ENCODE measurements at regions of chr10 and their contacts with region 1.

Region 1: GRCh38 chr10:123132576-123133477 is 2.9 kb upstream of the HMX3 start:
- DNase-seq: peak; percentile 79
- H3K4me3 ChIP-seq: peak overlapping the region in 2 of 3 experiments; percentile 5 to 12
- H3K27ac ChIP-seq: no peak overlapping the region
- H3K4me1 ChIP-seq: peaks cover 10% of the 10 kb centered on the region
- H3K27me3 ChIP-seq: peaks cover 74 to 77% of the 10 kb centered on the region in 2 experiments
- CTCF ChIP-seq: peak; percentile 90 to 92
- POLR2A ChIP-seq: no peak

Region 2: DNA sequence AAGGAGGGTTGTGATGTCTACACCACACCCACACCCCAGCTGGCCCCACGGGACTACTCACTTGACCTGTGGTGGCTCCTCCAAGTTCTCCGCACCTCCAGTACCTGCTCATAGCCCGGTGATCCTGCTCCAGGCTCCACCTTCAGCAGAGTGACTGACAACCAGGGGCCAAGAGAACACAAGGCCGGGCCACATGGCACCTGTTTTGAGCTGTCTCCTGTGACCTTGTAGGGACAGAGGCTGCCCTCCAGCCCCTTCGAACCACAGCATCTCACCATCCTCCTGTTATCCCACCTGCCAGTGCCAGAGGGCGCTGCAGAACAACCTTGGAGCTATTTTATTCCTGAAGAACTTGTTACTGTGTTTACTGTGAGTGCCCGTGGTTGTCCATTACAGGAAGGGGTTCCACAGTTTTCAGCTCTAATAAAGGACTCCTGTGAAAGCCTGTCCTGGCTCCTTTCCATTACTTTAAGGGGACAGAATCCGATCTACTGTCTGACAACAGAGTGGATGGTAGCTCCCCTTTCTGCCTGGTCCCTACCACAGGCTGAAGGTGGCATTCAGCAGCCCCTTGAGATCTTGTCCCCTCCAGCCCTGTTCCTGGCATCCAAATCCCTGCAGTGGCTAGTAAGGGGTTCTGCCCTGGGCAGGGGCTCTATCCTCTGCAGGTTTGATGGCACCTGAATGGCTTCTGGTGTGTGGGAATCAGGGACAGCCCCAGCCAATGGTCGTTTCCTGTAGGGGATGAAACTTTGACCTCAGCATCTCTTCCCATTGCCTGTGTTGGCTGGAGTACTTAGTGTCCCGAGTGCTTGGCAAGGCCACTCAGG is 484.0 kb before region 1 on chr10:
- CTCF ChIA-PET with region 1: interaction called, 3 read pairs
- POLR2A ChIA-PET with region 1: no interaction called
- dilution Hi-C with region 1: no loop called
- intact Hi-C with region 1: loop called (anchors 5 kb)
- DNase-seq: peak; percentile 50
- H3K4me3 ChIP-seq: no peak overlapping the region
- H3K27ac ChIP-seq: no peak overlapping the region
- H3K4me1 ChIP-seq: no peaks in the 10 kb centered on the region
- H3K27me3 ChIP-seq: peaks cover 3 to 9% of the 10 kb centered on the region in 2 experiments
- CTCF ChIP-seq: peak; percentile 72 to 75
- POLR2A ChIP-seq: no peak

Region 3: GRCh38 chr10:123147635-123148413 is 15.0 kb after region 1 on chr10 and contains the start of gene HMX2:
- CTCF ChIA-PET with region 1: interaction called, 20 read pairs
- POLR2A ChIA-PET with region 1: no interaction called
- dilution Hi-C with region 1: no loop called
- intact Hi-C with region 1: no loop called
- DNase-seq: no peak
- H3K4me3 ChIP-seq: no peak within 1 kb of the TSS
- H3K27ac ChIP-seq: no peak within 1 kb of the TSS
- H3K4me1 ChIP-seq: peaks cover 8% of the 10 kb centered on the region
- H3K27me3 ChIP-seq: peaks cover 90 to 99% of the 10 kb centered on the region in 2 experiments
- CTCF ChIP-seq: no peak
- POLR2A ChIP-seq: no peak
- total RNA-seq, gene HMX2: not detected in 2 replicates

Region 4: GRCh38 chr10:123272171-123272570 is 139.3 kb after region 1 on chr10:
- CTCF ChIA-PET with region 1: interaction called, 3 read pairs
- POLR2A ChIA-PET with region 1: no interaction called
- dilution Hi-C with region 1: no loop called
- intact Hi-C with region 1: loop called (anchors 2 kb)
- DNase-seq: no peak
- H3K4me3 ChIP-seq: no peak overlapping the region
- H3K27ac ChIP-seq: no peak overlapping the region
- H3K4me1 ChIP-seq: no peaks in the 10 kb centered on the region
- H3K27me3 ChIP-seq: peaks cover 5 to 14% of the 10 kb centered on the region in 2 experiments
- CTCF ChIP-seq: no peak
- POLR2A ChIP-seq: no peak

Region 5: DNA sequence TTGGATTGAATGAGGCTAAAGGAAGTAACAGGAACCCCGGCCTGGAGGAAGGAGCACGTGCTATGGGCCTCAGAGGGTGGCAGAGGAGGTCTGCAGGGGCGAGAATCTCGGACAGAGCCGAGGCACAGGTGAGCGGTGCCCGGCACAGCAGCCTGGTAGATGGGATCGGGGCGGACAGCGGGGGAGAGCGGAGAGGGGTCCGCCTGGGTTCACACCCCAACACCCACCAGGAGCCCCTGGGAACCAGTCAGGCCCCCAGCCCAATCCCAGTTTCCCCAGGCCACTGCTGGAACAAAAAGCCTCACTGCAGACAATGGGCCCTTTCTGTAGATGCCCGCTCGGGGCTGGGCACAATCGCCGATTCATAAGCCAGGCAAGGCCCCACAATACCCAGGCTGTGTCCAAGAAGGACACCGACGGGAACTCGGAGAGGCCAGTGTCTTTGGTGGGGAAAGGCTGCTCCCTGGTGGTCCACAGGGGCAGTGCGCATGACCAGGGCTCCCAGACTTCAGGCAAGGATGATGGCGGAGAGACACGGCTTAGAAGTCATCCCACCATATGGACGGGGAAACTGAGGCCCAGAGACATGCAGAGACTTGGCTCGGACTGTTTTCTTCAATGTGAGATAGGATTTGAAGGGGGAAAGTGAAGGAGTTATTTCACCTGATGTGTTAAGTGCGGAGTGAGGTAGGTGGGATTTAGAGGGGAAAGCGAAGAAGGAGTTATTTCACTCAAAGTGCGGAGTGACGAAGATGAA is 426.4 kb after region 1 on chr10:
- CTCF ChIA-PET with region 1: interaction called, 16 read pairs
- POLR2A ChIA-PET with region 1: no interaction called
- dilution Hi-C with region 1: no loop called
- intact Hi-C with region 1: loop called (anchors 1 kb)
- DNase-seq: peak; percentile 56
- H3K4me3 ChIP-seq: no peak overlapping the region
- H3K27ac ChIP-seq: no peak overlapping the region
- H3K4me1 ChIP-seq: no peaks in the 10 kb centered on the region
- H3K27me3 ChIP-seq: no peaks in the 10 kb centered on the region
- CTCF ChIP-seq: peak; percentile 91 to 96
- POLR2A ChIP-seq: no peak